Right ventricle myocardium inferior (tissue), 1 donor: ENCODE measurements at regions of chr5 and their contacts with region 1.

Region 1: DNA sequence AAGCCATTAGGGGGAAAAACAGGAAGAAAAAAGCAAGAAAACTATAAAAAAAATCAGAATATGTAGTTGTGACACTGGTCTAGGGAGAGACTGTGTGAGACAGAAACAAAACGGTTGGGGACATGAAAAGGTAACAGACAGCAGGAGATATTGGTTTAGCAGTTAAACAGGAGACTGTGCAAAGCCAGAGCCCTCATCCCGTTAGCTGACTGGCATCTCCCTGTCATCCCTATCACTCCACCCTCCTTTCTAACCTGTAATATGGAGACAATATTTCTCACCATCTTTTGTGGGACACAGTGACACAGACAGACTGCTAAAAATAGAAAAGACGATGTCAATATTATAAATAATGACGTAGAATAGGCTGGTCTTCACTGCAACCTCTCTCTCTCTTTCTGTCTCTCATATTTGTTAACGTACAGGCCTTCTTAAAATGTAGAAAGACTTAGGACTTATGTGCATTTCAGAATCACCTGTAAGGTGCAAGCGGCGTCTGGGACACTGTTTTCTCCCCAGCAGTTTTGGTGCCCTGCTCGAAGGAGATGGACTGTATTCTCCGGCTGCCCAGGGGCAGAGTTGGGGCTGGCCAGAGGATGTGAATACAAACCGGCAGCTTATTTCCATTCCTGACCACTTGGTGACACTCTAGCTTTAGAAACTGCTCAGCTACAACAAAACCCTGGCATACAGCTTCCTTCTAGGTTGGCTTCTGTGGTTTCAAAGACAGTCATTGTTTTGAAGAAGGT is 190.6 kb downstream of the MAT2B start:
- DNase-seq: no peak
- ATAC-seq: no peak

Region 2: DNA sequence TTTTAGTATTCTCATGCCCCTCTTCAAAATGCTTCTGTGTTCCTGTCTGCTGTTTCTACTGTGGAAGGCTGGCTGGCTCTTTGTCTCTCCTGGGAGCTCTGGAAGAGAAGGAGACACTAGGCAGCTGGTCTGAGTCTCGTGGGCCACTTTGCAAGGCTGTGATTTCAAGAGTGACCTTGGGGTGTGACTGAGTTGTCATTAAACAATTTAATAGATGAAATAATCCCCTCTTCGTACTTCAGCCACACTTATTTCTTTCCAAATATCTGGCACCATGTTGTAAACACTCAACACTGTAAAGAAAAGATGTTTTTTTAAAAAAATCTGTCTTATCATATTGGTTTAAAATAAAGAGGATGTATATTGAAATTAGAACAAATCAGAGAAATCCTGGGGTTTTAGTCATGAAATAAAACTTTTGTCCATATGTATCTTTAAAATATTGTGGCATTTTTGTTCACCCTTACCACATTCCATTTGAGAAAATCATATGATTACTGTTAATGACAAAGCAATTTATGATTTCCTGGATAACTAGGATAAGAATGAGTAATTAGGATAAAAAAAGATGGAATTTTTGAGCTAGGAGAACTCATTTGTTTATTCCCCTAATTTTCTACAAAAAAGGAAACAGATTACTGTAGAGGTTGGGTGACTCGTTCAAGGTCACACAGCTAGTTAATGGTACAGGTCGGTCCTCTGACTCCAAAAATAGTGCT is 10.2 kb after region 1 on chr5:
- intact Hi-C with region 1: no loop called
- DNase-seq: no peak
- ATAC-seq: no peak

Region 3: DNA sequence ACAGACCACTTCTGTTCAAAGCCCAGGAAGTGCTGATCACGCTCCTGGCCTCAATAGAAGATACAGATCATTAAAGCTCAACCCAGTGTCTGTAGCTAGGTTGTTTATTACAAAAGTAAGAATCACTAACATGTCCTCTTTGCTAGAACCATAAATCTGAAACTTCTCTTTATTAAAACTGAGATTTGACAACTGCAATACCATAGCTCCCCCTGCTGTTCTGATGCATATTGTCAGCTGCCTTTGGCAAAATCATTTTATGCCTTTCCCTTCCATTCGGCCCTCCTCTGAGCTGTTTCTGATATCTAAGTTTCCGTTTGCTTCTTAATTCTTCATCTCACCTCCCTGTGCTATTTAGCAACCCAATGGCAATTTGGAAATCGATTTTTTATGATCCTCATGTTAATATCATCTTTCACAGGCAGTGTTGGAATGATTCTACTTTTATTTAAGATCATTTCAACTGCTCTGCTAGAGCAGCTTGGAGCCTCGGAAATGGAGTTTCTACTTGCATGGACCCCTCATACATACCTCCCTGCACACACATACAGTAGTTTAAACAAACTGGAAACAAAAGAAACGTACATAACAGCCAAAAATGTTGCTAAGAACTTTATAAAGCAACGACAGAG is 808.3 kb after region 1 on chr5:
- intact Hi-C with region 1: loop called (anchors 2 kb)
- DNase-seq: no peak
- ATAC-seq: no peak